ENCODE measurements at regions of chrX and their contacts with region 1.

Region 1: DNA sequence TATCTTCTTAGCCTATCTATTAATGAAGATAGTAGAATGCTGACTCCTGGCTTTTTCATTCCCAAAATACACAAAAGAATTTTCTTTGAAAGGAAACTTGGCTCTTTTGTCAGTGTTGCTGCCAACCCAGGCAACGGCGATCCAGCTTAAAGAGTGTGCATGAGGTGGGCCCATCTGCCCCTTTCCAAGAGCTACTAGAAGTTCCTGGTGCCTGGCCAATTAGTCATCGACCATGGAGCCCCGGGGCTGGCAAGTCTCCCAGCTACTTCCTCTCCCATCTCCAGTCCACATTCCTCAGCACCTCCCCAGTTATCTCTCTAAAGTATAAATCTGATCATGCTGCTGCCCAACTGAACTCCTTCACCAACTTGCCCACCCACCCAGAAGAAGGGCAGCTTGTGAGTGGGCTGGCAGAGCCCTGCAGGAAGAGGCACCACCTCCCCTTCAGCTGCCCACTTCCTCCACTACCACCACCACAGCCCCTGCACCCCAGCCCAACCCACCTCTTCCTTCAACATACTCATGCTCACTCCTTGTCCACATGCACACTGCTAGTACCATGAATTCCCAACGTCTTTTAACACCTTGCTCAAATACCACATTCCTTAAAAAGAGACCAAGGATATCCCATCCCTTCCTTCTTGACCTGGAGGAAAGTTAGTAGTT is 158.2 kb upstream of the MAP3K15 start:
- DNase-seq: peak; percentile 79

Region 2: GRCh38 chrX:19625612-19626011 is 47.9 kb before region 1 on chrX:
- intact Hi-C with region 1: loop called (anchors 5 kb)
- DNase-seq: no peak